Ascending aorta (tissue), 2 donors: ENCODE measurements at regions of chrX and their contacts with region 1.

Region 1: DNA sequence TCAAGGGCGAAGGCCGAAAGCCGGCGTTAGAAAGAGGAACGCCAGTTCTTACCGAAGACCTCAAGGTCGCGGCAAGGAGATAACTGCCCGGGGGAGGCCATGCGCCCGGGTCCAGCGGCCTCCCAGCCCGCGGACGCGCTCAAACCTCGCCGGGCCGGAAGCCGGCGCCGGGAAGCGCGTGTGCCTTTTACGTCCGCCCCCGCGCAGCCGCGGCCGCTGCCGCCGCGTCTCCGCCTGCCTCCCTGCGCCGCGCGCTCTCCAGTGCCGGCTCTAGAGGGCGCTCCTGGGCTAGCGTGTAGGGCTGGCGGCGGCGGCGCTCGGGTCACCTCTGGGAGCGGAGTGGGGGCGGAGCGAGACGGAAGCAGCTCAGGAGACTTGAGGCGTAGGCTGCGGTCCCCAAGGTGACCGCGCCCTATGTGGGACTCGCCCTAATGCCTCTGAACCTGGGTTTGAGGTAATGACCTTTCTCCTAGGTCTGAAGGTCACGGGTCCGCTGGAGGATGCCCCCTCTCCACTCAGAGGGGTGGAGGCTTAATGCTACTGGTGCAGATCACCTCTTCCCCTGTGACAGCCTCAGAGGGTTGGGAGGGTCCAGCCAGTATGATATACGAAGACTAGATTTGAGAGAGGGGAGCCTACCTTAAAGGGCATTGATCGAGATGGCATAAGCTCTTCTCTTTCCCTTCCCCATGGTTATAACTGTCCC is 839 bp downstream of the SLC25A5 start:
- DNase-seq: peak; percentile 25 to 93
- H3K4me3 ChIP-seq: peak overlapping the region; percentile 83 to 85
- H3K27ac ChIP-seq: peak overlapping the region; percentile 94 to 95
- H3K4me1 ChIP-seq: peaks cover 0 to 3% of the 10 kb centered on the region in 2 donors
- H3K27me3 ChIP-seq: no peaks in the 10 kb centered on the region
- CTCF ChIP-seq: peak; percentile 46 to 75 (median 68)

Region 2: DNA sequence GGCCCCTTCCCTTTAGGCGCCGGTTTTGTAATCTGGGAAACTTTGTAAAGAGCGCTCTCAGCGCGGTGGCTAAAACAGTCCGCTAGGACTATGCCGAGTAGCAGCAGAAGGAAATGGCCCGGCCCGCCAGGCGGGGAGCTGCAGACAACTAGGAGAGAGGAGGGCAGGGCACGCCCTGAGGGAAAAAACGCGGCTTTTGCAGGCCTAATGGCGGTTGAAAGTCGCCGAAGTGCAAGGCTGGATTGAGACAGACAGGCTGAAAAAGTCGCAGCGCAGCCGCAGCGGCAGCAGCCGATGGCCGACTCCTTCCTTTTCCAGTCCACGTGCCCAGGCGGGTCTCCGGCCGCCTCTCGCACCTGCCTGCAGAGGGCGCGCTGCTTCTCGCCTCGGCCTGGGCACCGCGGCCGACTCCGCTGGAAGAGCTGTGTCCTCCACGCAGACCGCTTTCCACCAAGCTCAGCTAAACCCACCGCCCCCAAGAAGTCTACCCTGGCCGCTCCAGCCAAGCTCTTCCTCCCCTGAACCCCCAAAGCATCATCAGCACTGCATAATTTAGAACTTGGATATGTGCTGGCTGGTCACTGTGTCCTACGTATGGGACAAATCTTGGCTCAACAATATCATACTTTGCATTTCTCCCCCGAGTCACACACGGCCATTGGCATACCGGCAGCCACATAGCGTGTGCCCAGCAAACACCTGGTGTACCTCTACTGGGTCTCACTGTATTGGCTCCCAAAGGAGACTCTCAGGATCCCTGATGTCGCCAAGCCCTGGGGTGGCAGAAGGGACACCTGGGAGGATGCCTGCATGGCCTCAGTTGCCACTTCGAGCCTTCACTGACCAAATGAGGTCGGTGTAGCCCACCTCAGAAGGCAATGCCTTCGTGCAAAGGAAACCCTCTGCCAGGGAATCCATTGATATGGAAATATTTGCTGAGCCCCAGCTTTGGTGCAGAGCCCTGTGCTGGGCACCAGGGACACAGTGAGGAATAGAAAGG is 13.7 kb after region 1 on chrX:
- intact Hi-C with region 1: loop called (anchors 2 kb)
- DNase-seq: peak in 1 of 2 donors; percentile 75
- H3K4me3 ChIP-seq: peak overlapping the region; percentile 22 to 55
- H3K27ac ChIP-seq: peak overlapping the region in 1 of 2 donors; percentile 34
- H3K4me1 ChIP-seq: no peaks in the 10 kb centered on the region
- H3K27me3 ChIP-seq: no peaks in the 10 kb centered on the region
- CTCF ChIP-seq: peak; percentile 31 to 70 (median 63)

Region 3: GRCh38 chrX:119512146-119512800 is 43.2 kb after region 1 on chrX:
- intact Hi-C with region 1: loop called (anchors 1 kb)
- DNase-seq: peak in 1 of 2 donors; percentile 73
- H3K4me3 ChIP-seq: no peak overlapping the region
- H3K27ac ChIP-seq: no peak overlapping the region
- H3K4me1 ChIP-seq: no peaks in the 10 kb centered on the region
- H3K27me3 ChIP-seq: no peaks in the 10 kb centered on the region
- CTCF ChIP-seq: peak; percentile 52 to 68 (median 66)

Region 4: GRCh38 chrX:119606280-119607015 is 137.4 kb after region 1 on chrX and contains the start of gene NKRF:
- intact Hi-C with region 1: loop called (anchors 2 kb)
- DNase-seq: peak; percentile 68 to 95
- H3K4me3 ChIP-seq: peak within 1 kb of the TSS; percentile 63 to 77
- H3K27ac ChIP-seq: peak within 1 kb of the TSS; percentile 69 to 79
- H3K4me1 ChIP-seq: no peaks in the 10 kb centered on the region
- H3K27me3 ChIP-seq: no peaks in the 10 kb centered on the region
- CTCF ChIP-seq: no peak
- total RNA-seq, gene NKRF: 2.8 TPM

Region 5: DNA sequence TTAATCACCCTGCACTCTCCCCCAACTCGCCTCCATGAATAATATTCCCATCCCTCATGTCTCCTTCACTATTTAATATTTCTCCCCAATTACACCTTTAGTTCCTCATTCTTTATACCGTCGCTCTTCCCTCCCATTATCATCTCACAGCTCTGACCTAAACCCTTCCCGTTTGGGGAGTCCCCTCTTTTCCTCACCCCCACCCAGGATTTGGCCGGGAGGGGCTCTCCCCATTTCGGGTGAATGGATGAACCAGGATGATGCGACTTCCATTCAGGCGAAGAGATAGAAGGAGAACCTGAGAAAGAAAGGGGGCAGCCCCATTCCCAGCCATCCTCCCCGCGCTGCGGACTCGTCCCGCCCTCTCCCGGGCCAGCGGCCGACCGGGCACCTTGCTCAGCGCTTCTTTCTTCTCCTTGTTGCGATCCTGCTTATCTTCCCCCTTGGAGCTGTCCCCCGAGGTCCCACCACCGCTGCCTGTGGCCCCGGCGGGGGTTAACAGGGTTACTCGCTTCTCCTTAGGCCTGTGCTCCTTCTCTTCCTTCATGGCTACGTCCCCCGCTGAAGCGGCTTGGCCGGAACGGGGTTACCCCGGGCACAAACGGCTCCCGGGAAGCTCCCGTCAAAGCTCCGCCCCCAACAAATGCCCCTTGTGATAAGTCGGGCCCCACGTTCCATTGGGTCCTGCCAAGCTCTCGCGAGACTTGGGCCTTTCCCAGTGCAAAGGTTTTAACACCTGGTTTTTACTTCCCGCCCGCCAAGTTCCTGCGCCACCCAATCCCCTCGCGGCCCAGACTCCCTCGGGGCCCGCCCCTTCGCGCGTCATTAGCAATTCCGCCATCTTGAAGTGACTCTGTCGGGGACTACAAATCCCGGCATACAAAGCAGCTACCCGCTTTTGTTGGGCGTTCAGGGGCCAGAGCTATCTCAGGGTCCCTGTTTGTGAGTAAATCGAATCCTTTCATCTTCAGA is 383.6 kb after region 1 on chrX and contains the start of gene UPF3B:
- intact Hi-C with region 1: loop called (anchors 2 kb)
- DNase-seq: peak; percentile 92 to 98
- H3K4me3 ChIP-seq: peak within 1 kb of the TSS; percentile 57 to 70
- H3K27ac ChIP-seq: peak within 1 kb of the TSS; percentile 81 to 85
- H3K4me1 ChIP-seq: no peaks in the 10 kb centered on the region
- H3K27me3 ChIP-seq: no peaks in the 10 kb centered on the region
- CTCF ChIP-seq: no peak
- total RNA-seq, gene UPF3B: not detected